ENCODE measurements at regions of chr2 and their contacts with region 1.

Region 1: GRCh38 chr2:100427628-100428258 is 10.3 kb upstream of the CHST10 start:
- DNase-seq: peak; percentile 43
- ATAC-seq: peak; percentile 68
- H3K4me3 Mint-ChIP-seq: no peak overlapping the region
- H3K27ac Mint-ChIP-seq: no peak overlapping the region
- H3K4me1 Mint-ChIP-seq: peaks cover 3% of the 10 kb centered on the region
- H3K27me3 Mint-ChIP-seq: peaks cover 10% of the 10 kb centered on the region
- CTCF ChIP-seq: no peak

Region 2: DNA sequence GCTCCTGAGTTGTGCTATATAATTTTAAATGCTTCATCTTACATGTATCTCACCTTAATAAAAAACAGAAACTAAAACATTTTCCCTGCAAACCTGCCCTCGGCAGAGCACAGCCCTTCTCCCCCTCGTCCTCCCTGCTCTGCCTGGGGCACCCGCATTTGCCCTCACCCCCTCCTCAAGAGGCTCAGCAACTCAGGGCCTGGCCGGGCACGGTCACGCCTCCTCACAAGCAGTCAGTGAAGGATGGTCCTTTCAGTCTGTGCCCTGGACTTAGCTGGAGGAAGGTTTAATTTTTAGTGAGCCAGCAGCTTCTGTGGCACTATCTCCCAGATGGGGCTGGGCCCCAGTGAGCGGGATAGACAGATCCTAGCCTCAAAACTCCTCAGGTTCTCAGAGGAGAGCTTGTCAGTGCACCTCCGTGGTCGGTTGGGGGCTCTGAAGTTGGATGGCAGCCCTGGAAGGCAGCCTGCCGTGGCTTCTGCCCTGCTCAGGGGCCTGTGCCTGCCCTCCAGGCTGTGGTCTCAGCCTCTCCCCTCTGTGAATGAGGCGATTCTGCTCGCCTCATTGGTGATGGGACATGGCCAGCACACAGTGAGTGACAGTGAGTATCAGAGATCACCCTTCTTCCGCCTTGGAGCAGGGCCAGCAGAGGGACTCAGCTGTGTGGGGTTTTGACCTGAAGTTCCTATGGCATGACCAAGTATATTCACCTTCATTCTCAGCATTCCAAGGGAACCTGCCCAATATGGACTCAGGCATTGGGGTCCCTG is 229.1 kb before region 1 on chr2:
- CTCF ChIA-PET with region 1: no interaction called
- POLR2A ChIA-PET with region 1: no interaction called
- intact Hi-C with region 1: no loop called
- DNase-seq: no peak
- ATAC-seq: no peak
- H3K4me3 Mint-ChIP-seq: no peak overlapping the region
- H3K27ac Mint-ChIP-seq: no peak overlapping the region
- H3K4me1 Mint-ChIP-seq: no peaks in the 10 kb centered on the region
- H3K27me3 Mint-ChIP-seq: no peaks in the 10 kb centered on the region
- CTCF ChIP-seq: no peak

Region 3: GRCh38 chr2:100262555-100263320 is 165.0 kb before region 1 on chr2:
- CTCF ChIA-PET with region 1: interaction called, 5 read pairs
- POLR2A ChIA-PET with region 1: no interaction called
- intact Hi-C with region 1: loop called (anchors 2 kb)
- DNase-seq: peak; percentile 51
- ATAC-seq: peak; percentile 76
- H3K4me3 Mint-ChIP-seq: no peak overlapping the region
- H3K27ac Mint-ChIP-seq: no peak overlapping the region
- H3K4me1 Mint-ChIP-seq: peaks cover 8% of the 10 kb centered on the region
- H3K27me3 Mint-ChIP-seq: no peaks in the 10 kb centered on the region
- CTCF ChIP-seq: peak; percentile 92

Region 4: DNA sequence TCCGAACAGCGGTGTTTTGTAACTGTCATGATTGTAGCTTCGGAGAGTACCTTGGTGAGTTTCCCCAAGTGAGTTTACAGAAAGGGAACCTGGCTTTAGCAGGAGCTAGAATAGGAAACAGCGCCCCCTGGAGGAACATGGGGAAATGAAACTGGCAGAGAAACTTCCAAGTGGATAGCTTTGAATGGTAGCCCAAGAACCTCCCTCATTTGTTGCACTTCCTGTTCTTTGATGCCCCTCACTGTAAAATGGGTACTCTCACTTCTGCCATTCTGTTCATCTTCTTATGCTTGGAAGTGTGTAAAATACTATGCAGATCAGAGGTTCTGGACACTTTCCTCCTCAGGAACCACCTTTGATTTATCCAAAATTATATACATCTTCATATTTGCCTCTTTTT is 46.5 kb before region 1 on chr2:
- CTCF ChIA-PET with region 1: interaction called, 3 read pairs
- POLR2A ChIA-PET with region 1: interaction called, 13 read pairs
- intact Hi-C with region 1: no loop called
- DNase-seq: peak; percentile 71
- ATAC-seq: peak; percentile 97
- H3K4me3 Mint-ChIP-seq: no peak overlapping the region
- H3K27ac Mint-ChIP-seq: peak overlapping the region; percentile 31
- H3K4me1 Mint-ChIP-seq: peaks cover 8% of the 10 kb centered on the region
- H3K27me3 Mint-ChIP-seq: no peaks in the 10 kb centered on the region
- CTCF ChIP-seq: no peak

Region 5: DNA sequence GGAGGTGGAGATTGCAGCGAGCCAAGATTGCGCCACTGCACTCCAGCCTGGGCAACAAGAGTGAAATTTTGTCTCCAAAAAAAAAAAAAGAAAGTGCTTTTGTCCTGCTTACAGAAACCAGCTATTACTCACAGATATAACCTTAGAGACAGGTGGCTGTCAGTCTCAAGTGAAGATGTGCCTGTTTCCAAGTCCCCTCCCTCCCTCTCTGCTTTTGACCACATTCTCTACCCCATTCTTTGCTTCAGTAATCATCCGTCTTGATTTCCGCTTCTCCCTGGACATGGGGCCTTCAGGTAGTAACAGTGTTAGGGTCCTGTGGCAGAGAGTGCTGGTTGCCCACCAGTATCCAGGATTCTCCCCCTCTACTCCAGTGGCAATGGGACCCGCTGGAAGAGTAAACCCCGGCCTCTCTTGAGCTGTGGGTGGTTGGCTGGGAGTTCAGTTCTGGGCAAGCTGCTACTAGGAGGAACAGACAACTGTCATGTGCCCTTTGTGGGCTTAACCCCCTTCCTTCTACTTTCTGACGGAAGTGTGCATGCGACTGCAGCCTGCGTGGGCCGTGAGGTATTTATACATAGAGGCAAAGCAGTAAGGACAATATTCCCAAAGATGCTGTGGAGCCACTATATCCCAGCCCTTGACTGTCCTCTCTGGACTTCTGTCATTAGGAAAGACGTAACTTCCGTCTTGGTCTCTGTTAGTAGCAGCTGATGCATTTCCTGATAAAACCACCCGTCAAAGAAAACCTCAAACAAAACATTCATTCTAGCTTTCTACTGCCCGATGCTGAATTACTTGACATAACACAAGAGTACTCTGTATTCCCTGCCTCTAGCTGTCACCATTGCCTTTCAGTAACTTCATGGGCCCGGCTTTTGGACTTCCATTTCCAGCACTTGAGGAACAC is 152.9 kb after region 1 on chr2:
- CTCF ChIA-PET with region 1: no interaction called
- POLR2A ChIA-PET with region 1: no interaction called
- intact Hi-C with region 1: loop called (anchors 5 kb)
- DNase-seq: peak; percentile 50
- ATAC-seq: peak; percentile 79
- H3K4me3 Mint-ChIP-seq: peak overlapping the region; percentile 56
- H3K27ac Mint-ChIP-seq: peak overlapping the region; percentile 99
- H3K4me1 Mint-ChIP-seq: peaks cover 22% of the 10 kb centered on the region
- H3K27me3 Mint-ChIP-seq: no peaks in the 10 kb centered on the region
- CTCF ChIP-seq: no peak

Region 6: GRCh38 chr2:100984892-100985379 is 557.2 kb after region 1 on chr2:
- CTCF ChIA-PET with region 1: no interaction called
- POLR2A ChIA-PET with region 1: no interaction called
- intact Hi-C with region 1: loop called (anchors 1 kb)
- DNase-seq: peak; percentile 61
- ATAC-seq: peak; percentile 88
- H3K4me3 Mint-ChIP-seq: no peak overlapping the region
- H3K27ac Mint-ChIP-seq: no peak overlapping the region
- H3K4me1 Mint-ChIP-seq: no peaks in the 10 kb centered on the region
- H3K27me3 Mint-ChIP-seq: peaks cover 8% of the 10 kb centered on the region
- CTCF ChIP-seq: peak; percentile 76

Region 7: DNA sequence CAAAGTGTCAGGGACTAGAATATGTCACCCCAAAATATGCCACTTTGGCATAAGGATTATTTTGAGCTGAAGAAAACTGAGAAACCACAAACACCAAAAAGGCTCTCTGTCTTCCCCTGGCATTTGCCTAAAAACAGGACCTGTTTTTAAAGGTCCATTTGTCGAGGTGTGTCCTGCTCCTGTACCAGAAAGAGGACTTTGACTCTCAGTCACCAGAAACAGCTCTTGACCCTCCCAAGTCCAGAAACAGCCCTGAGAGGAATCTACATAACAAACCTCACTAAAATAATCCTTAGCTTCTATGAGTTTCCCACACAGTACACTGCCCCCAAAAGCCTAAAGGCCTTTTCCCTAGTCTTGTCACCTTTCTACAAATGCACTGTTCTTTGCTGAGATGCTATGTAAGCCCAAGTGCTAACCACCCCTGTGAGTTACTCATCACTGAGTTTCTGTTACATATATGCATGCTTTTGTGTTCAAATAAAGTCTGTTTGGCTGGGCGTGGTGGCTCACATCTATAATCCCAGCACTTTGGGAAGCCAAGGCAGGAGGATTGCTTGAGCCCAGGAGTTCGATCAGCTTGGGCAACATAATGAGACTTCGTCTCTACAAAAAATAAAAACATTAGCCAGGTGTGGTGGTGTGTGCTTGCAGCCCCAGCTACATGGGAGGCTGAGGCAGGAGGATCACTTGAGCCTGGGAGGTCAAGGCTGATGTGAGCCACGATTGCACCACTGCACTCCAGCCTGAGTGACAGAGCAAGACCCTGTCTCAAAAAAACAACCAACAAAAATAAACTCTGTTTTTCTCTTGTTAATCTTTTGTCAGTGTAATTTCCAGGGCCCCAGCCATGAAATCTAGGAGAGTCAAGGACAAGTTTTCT is 629.5 kb after region 1 on chr2:
- CTCF ChIA-PET with region 1: no interaction called
- POLR2A ChIA-PET with region 1: no interaction called
- intact Hi-C with region 1: no loop called
- DNase-seq: no peak
- ATAC-seq: no peak
- H3K4me3 Mint-ChIP-seq: no peak overlapping the region
- H3K27ac Mint-ChIP-seq: no peak overlapping the region
- H3K4me1 Mint-ChIP-seq: no peaks in the 10 kb centered on the region
- H3K27me3 Mint-ChIP-seq: peaks cover 1% of the 10 kb centered on the region
- CTCF ChIP-seq: no peak